Motor neuron (in vitro differentiated cells): ENCODE measurements at regions of chr3 and their contacts with region 1.

Region 1: DNA sequence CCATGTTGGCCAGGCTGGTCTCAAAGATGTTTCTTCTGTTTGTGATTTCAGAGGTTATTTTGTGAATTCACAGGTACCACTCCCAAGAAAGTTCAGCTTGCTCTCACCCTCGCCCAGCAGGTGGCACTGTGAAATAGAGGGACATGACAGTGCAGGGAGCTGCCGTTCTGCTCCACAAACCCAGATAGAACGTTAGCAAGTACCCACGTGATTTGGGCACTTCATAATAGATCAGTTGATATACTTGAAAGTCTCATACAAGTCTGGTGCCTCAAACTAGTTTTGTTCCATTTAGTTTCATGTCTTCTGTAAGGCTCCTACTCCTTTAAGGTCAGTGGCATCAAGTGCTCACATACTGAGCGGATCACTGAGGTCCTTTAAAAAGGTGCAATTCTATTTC is 45.5 kb downstream of the FILIP1L start:
- ATAC-seq: peak in 6 of 8 experiments; percentile 20 to 99 (median 82)
- H3K4me3 ChIP-seq: no peak overlapping the region
- H3K27ac ChIP-seq: no peak overlapping the region
- H3K4me1 ChIP-seq: peaks cover 1 to 7% of the 10 kb centered on the region in 2 donors

Region 2: DNA sequence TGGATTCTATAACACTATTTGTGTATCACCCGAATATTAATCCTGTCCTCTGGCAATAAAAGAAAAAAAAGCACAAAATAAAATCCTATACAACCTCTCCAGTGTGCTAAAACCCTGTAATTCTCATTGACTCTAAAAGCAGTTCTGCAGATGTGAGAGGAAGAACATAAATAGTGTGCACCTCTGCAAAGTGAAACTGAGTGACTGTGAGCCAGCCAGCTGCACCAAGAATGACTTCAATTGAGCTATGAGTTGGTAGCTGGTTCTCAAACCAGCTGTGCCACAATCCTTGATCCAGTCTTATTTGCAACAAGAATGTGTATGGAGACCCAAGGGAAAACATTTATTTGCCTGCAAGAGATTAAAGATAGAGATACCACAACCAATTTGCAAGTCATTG is 461.7 kb before region 1 on chr3:
- in situ Hi-C with region 1: no loop called
- ATAC-seq: no peak
- H3K4me3 ChIP-seq: no peak overlapping the region
- H3K27ac ChIP-seq: no peak overlapping the region
- H3K4me1 ChIP-seq: no peaks in the 10 kb centered on the region

Region 3: DNA sequence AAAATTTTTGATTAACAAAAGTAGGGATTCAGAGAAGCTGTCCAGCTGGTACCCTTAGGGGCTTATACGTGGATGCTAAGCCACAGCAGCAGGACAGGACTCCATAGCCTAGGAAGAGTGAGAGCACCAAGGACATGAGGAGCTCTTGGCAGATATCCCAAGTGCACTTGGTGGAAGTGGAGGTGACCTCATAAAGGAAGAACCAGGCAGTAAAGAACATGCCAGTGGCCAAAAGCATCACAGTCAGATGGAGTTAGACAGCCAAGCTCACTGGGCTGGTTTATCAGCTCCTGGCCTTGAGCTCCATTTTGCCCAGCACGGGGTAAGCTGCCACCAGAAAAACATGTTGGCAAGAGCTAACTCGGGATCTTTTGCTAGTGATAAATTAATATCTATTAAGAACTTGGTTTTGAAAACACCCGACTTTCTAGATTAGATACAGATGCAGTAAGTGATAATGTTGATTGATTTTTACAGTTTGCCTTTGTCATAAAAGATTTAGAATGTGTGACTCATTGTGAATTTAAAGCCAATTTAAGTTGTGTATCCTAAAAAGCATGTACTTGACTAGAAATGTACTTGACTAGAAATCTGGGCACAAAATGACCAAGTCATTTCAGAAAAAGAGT is 143.1 kb before region 1 on chr3:
- in situ Hi-C with region 1: no loop called
- ATAC-seq: peak in 5 of 8 experiments; percentile 24 to 57 (median 36)
- H3K4me3 ChIP-seq: no peak overlapping the region
- H3K27ac ChIP-seq: no peak overlapping the region
- H3K4me1 ChIP-seq: peaks cover 6 to 9% of the 10 kb centered on the region in 2 donors

Region 4: DNA sequence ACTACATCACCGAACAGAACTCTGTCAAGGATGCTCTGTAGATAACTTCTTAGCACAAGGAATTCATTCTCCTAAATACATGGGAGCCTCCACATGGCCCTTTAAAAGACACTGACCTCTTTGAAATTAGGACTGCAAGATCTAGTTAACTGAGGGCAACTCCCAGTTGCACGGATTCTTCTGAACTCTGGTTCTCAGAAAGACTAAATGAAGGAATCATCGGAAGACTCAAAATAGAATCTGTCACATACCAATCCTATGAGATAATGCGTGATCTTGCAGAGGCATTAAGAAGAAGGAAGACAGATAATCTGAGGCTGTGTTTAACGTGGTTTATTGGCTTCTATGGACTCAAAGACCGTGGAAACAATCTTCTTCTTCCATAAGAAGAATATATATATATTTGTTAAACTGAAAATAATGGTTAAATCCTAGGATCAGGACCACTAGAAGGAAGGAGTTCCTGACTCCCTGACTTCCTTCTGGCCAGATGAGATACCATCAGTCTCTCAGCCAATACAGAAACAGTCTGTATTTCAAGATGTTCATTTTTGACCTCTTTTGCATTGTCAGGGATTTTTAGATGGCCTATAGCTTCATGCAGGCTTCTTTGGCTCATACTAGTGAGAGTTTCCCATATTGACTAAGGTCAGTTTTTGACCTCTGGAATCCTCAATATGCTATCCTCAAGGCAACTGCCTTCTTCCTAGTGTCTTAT is 158.0 kb after region 1 on chr3:
- in situ Hi-C with region 1: loop called in 2 of 9 experiments (anchors 25 kb)
- ATAC-seq: peak in 2 of 8 experiments; percentile 73 to 77
- H3K4me3 ChIP-seq: no peak overlapping the region
- H3K27ac ChIP-seq: no peak overlapping the region
- H3K4me1 ChIP-seq: no peaks in the 10 kb centered on the region

Region 5: GRCh38 chr3:100254168-100254777 is 185.4 kb after region 1 on chr3:
- in situ Hi-C with region 1: loop called in 3 of 9 experiments (anchors 5 to 25 kb)
- ATAC-seq: peak; percentile 84 to 100 (median 90)
- H3K4me3 ChIP-seq: no peak overlapping the region
- H3K27ac ChIP-seq: no peak overlapping the region
- H3K4me1 ChIP-seq: no peaks in the 10 kb centered on the region